Activated CD8-positive, alpha-beta T cell treated with anti-CD3 and anti-CD28 coated beads for 36 hours (primary cell): ENCODE measurements at regions of chr12 and their contacts with region 1.

Region 1: DNA sequence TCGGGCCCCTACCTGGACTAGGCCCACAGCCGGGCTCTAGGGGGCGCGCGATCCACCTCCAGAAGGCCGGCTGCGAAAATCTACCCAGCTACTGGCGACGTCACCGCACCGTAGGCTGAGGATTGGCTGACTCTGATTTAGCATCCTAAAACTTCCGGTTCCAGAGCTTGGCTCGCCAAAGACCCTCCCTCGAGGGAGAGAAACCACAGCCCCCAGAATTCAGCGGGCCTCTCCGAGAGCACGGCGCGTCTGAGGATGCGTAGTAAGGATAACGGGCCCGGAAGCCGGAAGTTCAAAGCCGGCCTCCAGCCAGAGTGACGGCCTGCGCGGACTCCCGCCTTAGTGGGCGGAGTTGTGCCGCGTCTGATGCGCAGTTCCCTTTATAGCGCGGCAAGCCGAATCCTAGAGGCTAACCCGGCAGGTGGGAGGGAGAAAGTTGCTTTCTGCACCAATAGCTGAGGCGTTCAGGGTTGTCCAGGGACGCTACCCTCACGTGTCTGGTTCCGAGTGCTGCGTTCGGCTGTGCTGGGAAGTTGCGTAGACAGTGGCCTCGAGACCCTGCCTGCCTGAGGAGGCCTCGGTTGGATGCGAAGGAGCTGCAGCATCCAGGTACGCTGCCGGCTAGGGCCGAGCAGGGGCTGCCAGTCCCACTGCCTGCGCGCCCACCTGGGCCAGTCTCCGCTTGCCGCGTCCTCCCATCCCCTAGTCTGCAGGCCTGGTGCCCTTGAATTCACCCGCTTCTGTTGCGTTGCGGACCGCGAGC is at the start of gene COX14:
- DNase-seq: peak; percentile 100
- ATAC-seq: peak; percentile 88
- H3K4me3 Mint-ChIP-seq: peak within 1 kb of the TSS; percentile 95
- H3K27ac Mint-ChIP-seq: peak within 1 kb of the TSS; percentile 94
- H3K4me1 Mint-ChIP-seq: peaks cover 34% of the 10 kb centered on the region
- H3K27me3 Mint-ChIP-seq: no peaks in the 10 kb centered on the region
- CTCF ChIP-seq: peak; percentile 84
- total RNA-seq, gene COX14: 43.1 to 51.0 TPM

Region 2: GRCh38 chr12:49959570-49960465 is 152.1 kb before region 1 on chr12:
- CTCF ChIA-PET with region 1: no interaction called
- POLR2A ChIA-PET with region 1: no interaction called
- intact Hi-C with region 1: no loop called
- DNase-seq: no peak
- ATAC-seq: no peak
- H3K4me3 Mint-ChIP-seq: no peak overlapping the region
- H3K27ac Mint-ChIP-seq: no peak overlapping the region
- H3K4me1 Mint-ChIP-seq: peaks cover 6% of the 10 kb centered on the region
- H3K27me3 Mint-ChIP-seq: peaks cover 67% of the 10 kb centered on the region
- CTCF ChIP-seq: no peak

Region 3: DNA sequence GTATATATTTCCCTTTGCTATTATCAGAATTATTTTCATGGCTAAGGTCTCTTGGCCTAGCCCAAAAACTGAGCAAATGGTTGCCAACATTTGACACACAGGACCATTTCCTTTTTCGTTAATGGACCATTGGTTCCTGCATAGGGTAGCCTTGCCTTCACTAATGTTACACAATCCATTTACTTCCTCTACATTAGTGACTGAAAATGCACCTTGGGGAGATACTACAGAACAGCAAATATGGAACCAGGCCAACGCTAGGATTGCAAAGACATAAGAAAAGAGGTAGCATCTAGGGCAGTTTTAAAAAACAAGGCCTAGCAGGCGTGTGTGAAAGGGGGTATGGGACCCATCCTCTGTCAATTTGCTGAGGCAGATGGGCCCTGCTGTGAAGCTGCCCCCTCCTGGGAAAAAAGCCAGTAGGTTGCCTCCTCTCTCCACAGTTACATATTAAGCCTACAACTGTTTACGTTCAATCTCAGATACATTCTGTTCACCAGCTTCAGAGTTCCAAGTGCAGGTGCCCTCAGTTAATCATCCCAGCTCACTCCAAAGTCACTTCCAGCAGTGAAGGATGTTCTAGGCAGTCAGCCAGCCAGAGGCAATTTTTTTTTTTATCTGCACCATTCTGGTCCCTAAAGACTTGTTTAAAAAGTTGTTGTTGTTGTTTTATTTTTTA is 124.1 kb before region 1 on chr12:
- CTCF ChIA-PET with region 1: no interaction called
- POLR2A ChIA-PET with region 1: no interaction called
- intact Hi-C with region 1: no loop called
- DNase-seq: no peak
- ATAC-seq: no peak
- H3K4me3 Mint-ChIP-seq: no peak overlapping the region
- H3K27ac Mint-ChIP-seq: no peak overlapping the region
- H3K4me1 Mint-ChIP-seq: peaks cover 4% of the 10 kb centered on the region
- H3K27me3 Mint-ChIP-seq: no peaks in the 10 kb centered on the region
- CTCF ChIP-seq: no peak

Region 4: DNA sequence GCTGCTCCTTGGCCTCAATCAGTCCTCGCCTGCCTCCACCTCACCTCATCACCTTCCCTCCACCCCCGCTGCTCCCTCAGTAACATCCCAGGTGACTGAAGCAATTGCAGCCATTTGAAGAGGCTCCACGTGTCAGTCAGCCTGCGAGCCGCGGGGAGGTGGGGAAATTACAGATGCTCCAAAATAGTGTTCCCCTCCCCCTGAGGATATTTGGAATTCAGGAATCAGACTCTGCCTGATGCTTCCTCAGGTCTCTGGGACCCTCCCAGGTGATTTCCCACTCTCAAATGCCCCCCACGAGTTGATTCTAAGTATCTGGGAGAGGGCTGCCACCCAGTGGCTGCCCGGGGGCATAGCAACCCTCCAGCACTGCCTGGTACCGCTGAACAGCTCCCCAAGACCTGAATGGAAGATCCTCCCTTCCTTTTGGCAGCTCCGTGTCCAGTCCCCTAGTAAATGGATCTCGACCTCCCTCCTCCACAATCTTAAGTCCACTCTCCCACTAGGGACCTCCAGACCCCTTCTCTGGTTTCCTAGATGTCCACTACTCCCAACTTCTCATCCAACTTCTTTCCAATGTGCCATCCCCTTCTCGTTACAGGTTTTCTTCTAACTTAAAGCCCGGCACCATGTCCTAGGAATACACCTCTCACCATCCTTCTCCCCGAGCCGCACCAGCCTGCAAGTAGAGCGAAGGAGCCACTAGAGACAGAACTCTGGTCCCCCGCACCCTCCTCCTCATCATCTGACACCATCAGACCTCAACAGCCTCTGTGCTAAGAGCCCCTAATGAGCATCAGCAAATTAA is 55.8 kb before region 1 on chr12:
- CTCF ChIA-PET with region 1: interaction called, 13 read pairs
- POLR2A ChIA-PET with region 1: interaction called, 7 read pairs
- intact Hi-C with region 1: no loop called
- DNase-seq: peak; percentile 74
- ATAC-seq: peak; percentile 46
- H3K4me3 Mint-ChIP-seq: peak overlapping the region; percentile 45
- H3K27ac Mint-ChIP-seq: peak overlapping the region; percentile 39
- H3K4me1 Mint-ChIP-seq: peaks cover 41% of the 10 kb centered on the region
- H3K27me3 Mint-ChIP-seq: peaks cover 28% of the 10 kb centered on the region
- CTCF ChIP-seq: peak; percentile 98

Region 5: DNA sequence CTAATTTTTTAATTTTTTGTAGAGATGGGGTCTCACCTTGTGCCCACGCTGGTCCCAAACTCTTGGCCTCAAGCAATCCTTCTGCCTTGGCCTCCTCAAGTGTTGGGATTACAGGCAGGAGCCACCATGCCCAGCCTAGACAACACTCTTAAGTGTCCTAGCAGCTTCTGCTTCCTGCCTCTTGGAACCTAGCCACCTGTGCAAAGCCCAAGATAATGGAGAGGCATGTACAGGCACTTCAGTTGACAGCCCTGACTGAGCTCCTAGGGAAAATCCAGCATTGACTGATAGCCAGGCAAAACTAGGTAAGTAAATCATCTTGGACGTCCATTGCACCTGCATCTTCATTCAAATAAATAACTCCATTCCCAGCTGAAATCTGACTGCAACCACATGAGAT is 15.7 kb after region 1 on chr12:
- CTCF ChIA-PET with region 1: interaction called, 57 read pairs
- POLR2A ChIA-PET with region 1: interaction called, 23 read pairs
- intact Hi-C with region 1: no loop called
- DNase-seq: no peak
- ATAC-seq: no peak
- H3K4me3 Mint-ChIP-seq: no peak overlapping the region
- H3K27ac Mint-ChIP-seq: peak overlapping the region; percentile 16
- H3K4me1 Mint-ChIP-seq: peaks cover 12% of the 10 kb centered on the region
- H3K27me3 Mint-ChIP-seq: no peaks in the 10 kb centered on the region
- CTCF ChIP-seq: no peak

Region 6: GRCh38 chr12:50151047-50151687 is 39.3 kb after region 1 on chr12:
- CTCF ChIA-PET with region 1: interaction called, 14 read pairs
- POLR2A ChIA-PET with region 1: interaction called, 4 read pairs
- intact Hi-C with region 1: no loop called
- DNase-seq: no peak
- ATAC-seq: no peak
- H3K4me3 Mint-ChIP-seq: no peak overlapping the region
- H3K27ac Mint-ChIP-seq: peak overlapping the region; percentile 60
- H3K4me1 Mint-ChIP-seq: peaks cover 21% of the 10 kb centered on the region
- H3K27me3 Mint-ChIP-seq: no peaks in the 10 kb centered on the region
- CTCF ChIP-seq: no peak

Region 7: DNA sequence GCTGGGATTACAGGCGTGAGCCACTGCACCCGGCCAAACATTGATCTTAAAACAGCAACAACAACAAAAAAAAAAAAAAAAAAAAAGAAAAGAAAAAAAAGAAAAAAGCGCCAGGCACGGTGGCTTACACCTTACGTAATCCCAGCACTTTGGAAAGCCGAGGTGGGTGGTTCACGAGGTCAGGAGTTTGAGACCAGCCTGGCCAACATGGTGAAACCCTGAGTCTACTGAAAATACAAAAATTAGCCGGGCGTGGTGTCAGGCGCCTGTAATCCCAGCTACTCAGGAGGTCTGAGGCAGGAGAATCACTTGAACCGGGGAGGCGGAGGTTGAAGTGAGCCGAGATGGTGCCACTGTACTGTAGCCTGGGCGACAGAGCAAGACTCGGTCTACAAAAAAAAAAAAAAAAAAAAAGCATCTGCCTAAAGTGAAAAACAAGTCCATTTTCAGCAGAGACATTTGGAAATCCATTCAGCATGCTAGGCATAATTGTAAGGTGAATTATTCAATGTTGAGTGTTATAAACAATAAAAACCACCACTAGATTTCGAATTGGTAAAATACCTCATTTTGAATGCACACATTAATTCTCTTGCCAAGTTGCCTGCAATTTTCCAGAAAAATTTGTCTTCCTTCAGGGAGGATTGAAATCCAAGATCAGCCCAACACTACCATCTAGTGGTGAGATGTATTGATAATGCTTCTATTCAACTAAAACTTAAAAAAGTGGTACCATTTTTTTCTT is 63.3 kb after region 1 on chr12:
- CTCF ChIA-PET with region 1: interaction called, 50 read pairs
- POLR2A ChIA-PET with region 1: no interaction called
- intact Hi-C with region 1: no loop called
- DNase-seq: no peak
- ATAC-seq: no peak
- H3K4me3 Mint-ChIP-seq: no peak overlapping the region
- H3K27ac Mint-ChIP-seq: no peak overlapping the region
- H3K4me1 Mint-ChIP-seq: peaks cover 2% of the 10 kb centered on the region
- H3K27me3 Mint-ChIP-seq: no peaks in the 10 kb centered on the region
- CTCF ChIP-seq: peak; percentile 97

Region 8: GRCh38 chr12:50242751-50243191 is 130.9 kb after region 1 on chr12:
- CTCF ChIA-PET with region 1: no interaction called
- POLR2A ChIA-PET with region 1: no interaction called
- intact Hi-C with region 1: no loop called
- DNase-seq: no peak
- ATAC-seq: no peak
- H3K4me3 Mint-ChIP-seq: no peak overlapping the region
- H3K27ac Mint-ChIP-seq: no peak overlapping the region
- H3K4me1 Mint-ChIP-seq: peaks cover 17% of the 10 kb centered on the region
- H3K27me3 Mint-ChIP-seq: no peaks in the 10 kb centered on the region
- CTCF ChIP-seq: no peak

Region 9: DNA sequence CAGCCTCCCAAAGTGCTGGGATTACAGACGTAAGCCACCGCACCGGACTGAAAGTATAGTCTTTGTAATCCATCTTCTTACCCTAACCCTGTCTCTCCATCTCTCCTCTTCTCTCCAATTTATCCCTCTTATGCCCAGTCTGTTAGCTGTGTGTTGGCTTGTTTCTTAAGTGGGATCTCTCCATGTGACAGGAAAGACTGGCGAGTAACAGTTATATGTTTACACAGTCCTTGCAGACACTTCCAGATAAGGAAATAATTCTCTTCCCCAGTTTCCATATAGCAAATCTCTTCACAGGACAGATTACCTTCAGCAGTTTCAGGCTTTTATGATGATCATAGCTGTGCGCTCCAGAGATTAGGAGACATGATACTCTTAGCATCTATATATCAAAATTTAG is 376.9 kb after region 1 on chr12:
- CTCF ChIA-PET with region 1: no interaction called
- POLR2A ChIA-PET with region 1: no interaction called
- intact Hi-C with region 1: no loop called
- DNase-seq: no peak
- ATAC-seq: no peak
- H3K4me3 Mint-ChIP-seq: no peak overlapping the region
- H3K27ac Mint-ChIP-seq: no peak overlapping the region
- H3K4me1 Mint-ChIP-seq: no peaks in the 10 kb centered on the region
- H3K27me3 Mint-ChIP-seq: no peaks in the 10 kb centered on the region
- CTCF ChIP-seq: no peak